ENCODE measurements at regions of chr5 and their contacts with region 1.

Region 1: DNA sequence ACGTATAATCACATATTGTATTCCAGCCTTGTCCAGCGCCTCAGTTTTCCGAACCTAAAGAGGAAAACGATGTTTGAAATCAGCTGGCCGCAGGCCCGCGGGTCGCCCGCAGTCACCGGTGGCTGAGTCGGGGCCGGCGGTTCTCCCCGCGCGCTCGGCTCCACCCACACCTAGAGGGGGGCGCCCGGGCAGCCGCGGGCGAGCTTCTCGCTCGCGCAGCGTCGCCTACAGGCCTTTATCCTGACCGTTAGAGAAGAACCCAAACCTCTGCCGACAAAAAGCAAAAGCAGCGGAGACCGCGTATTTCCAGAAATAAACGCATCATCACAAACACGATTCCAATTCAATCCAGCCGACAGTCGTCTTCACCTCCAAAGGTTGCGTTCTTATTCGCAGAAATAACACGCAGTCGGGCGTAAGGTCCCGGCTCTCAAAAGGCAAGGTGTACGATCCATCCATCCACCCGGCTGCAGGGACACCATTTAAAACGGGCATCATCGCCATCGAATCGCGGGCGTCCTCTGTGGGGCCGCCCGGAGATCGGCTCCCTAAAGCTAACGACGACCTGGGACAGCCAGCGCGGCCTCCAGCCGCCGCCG is 680 bp upstream of the NIPBL start:
- DNase-seq: peak; percentile 89
- ATAC-seq: peak; percentile 70
- H3K4me3 ChIP-seq: peak overlapping the region; percentile 85 to 99 (median 94)
- H3K4me3 Mint-ChIP-seq: peak overlapping the region; percentile 91
- H3K27ac ChIP-seq: peak overlapping the region; percentile 92 to 98
- H3K27ac Mint-ChIP-seq: peak overlapping the region; percentile 95
- H3K4me1 ChIP-seq: peaks cover 19 to 42% of the 10 kb centered on the region in 2 donors
- H3K4me1 Mint-ChIP-seq: peaks cover 40% of the 10 kb centered on the region
- H3K27me3 ChIP-seq: no peaks in the 10 kb centered on the region
- H3K27me3 Mint-ChIP-seq: no peaks in the 10 kb centered on the region
- CTCF ChIP-seq: peak; percentile 71

Region 2: GRCh38 chr5:36151434-36152323 is 724.2 kb before region 1 on chr5 and contains the starts of genes LMBRD2 and SKP2:
- CTCF ChIA-PET with region 1: no interaction called
- POLR2A ChIA-PET with region 1: interaction called, 3 read pairs
- intact Hi-C with region 1: loop called (anchors 1 kb)
- DNase-seq: peak; percentile 96
- ATAC-seq: peak; percentile 98
- H3K4me3 ChIP-seq: peak within 1 kb of the TSS; percentile 67 to 82 (median 78)
- H3K4me3 Mint-ChIP-seq: peak within 1 kb of the TSS; percentile 95
- H3K27ac ChIP-seq: peak within 1 kb of the TSS; percentile 55 to 83
- H3K27ac Mint-ChIP-seq: peak within 1 kb of the TSS; percentile 87
- H3K4me1 ChIP-seq: peaks cover 19 to 25% of the 10 kb centered on the region in 2 donors
- H3K4me1 Mint-ChIP-seq: peaks cover 46% of the 10 kb centered on the region
- H3K27me3 ChIP-seq: no peaks in the 10 kb centered on the region
- H3K27me3 Mint-ChIP-seq: no peaks in the 10 kb centered on the region
- CTCF ChIP-seq: no peak
- total RNA-seq, gene LMBRD2: 9.9 and 10.0 TPM in 2 replicates
- total RNA-seq, gene SKP2: 26.7 and 33.0 TPM in 2 replicates

Region 3: DNA sequence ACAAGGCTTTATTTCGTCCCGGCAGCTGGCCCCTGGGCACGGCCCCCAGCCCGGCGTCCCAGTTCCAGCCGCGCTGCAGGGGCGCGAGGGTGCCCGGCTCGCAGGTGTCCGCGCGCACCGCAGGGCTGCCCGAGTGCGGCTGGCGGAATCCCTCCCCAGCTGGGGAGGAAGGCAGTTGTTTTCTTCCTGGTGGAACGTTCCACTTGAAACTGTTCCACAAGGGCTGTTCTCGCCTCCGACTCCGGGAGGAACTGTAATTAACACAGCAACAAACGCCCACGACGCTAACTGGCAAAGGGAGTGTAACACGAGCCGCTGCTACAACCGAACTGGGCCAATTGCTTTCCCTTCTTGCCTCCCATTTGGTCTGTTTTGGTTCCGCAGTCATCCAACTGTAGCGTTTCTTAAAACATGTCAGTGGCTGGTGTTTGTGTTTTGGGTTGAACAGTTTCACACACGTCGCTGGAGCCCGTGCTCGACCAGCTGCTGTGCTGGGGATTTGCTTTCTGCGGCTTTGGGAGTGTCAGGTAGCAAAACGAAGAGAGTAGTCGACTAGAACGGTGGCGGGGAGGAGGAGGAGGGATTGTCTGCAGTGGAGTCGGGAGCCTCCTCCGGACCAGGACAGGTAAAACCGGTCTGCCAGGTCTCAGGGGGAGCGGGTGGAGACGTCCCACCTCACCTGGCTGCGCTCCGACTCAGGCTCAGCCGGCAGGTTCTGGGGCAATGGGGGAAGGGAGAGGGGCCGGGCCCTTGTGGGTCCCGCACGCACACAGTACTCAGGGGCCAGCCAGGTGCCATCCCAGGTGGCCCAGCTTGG is 130.9 kb before region 1 on chr5:
- CTCF ChIA-PET with region 1: interaction called, 36 read pairs
- POLR2A ChIA-PET with region 1: interaction called, 10 read pairs
- intact Hi-C with region 1: loop called (anchors 1 kb)
- DNase-seq: peak; percentile 70
- ATAC-seq: peak; percentile 70
- H3K4me3 ChIP-seq: peak overlapping the region; percentile 47 to 88 (median 63)
- H3K4me3 Mint-ChIP-seq: peak overlapping the region; percentile 95
- H3K27ac ChIP-seq: peak overlapping the region in 1 of 2 donors; percentile 44
- H3K27ac Mint-ChIP-seq: peak overlapping the region; percentile 94
- H3K4me1 ChIP-seq: peaks cover 20% of the 10 kb centered on the region in 2 donors
- H3K4me1 Mint-ChIP-seq: peaks cover 20% of the 10 kb centered on the region
- H3K27me3 ChIP-seq: peaks cover 0 to 13% (median 3%) of the 10 kb centered on the region in 4 experiments
- H3K27me3 Mint-ChIP-seq: peaks cover 12% of the 10 kb centered on the region
- CTCF ChIP-seq: peak; percentile 36

Region 4: DNA sequence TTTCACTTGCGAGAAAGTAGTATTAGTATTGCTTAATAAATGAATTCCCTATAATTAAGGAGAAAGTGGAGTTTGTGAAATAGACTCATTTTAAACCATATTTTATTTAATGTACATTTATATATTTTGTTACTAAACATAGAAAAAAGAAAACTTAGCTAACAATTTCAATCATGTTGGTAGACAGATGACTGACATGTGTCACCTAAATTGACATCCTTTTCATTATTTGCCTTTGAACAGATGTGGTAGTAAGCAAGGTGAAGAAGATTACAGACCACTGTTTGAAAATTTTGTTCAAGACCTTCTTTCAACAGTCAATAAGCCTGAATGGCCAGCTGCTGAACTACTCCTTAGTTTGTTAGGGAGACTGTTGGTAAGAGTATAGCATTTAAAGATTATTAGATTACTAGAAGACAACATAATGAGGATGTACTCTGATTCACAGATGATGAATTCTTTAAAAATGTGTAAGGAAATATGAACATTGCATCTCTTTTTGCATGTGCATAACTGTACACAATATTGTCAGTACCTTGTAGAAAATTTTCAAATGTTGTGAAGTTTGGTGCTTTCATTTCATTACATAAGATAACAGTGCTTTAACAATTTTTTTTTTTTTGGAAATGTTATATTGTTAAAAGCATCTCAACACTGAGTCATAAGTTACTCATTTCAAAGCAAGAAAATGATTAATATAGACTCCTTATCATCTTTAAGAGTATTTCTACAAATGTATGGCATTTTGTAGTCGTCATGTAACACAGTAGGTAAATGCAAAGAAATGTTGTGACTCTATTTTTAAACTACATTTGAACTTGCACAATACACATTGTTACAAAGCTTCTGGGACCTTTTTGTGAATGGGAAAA is 140.1 kb after region 1 on chr5:
- CTCF ChIA-PET with region 1: no interaction called
- POLR2A ChIA-PET with region 1: no interaction called
- intact Hi-C with region 1: no loop called
- DNase-seq: no peak
- ATAC-seq: no peak
- H3K4me3 ChIP-seq: no peak overlapping the region
- H3K4me3 Mint-ChIP-seq: no peak overlapping the region
- H3K27ac ChIP-seq: no peak overlapping the region
- H3K27ac Mint-ChIP-seq: no peak overlapping the region
- H3K4me1 ChIP-seq: no peaks in the 10 kb centered on the region
- H3K4me1 Mint-ChIP-seq: no peaks in the 10 kb centered on the region
- H3K27me3 ChIP-seq: no peaks in the 10 kb centered on the region
- H3K27me3 Mint-ChIP-seq: no peaks in the 10 kb centered on the region
- CTCF ChIP-seq: no peak

Region 5: GRCh38 chr5:37080697-37081096 is 204.8 kb after region 1 on chr5:
- CTCF ChIA-PET with region 1: no interaction called
- POLR2A ChIA-PET with region 1: no interaction called
- intact Hi-C with region 1: no loop called
- DNase-seq: no peak
- ATAC-seq: no peak
- H3K4me3 ChIP-seq: no peak overlapping the region
- H3K4me3 Mint-ChIP-seq: no peak overlapping the region
- H3K27ac ChIP-seq: no peak overlapping the region
- H3K27ac Mint-ChIP-seq: no peak overlapping the region
- H3K4me1 ChIP-seq: no peaks in the 10 kb centered on the region
- H3K4me1 Mint-ChIP-seq: no peaks in the 10 kb centered on the region
- H3K27me3 ChIP-seq: no peaks in the 10 kb centered on the region
- H3K27me3 Mint-ChIP-seq: no peaks in the 10 kb centered on the region
- CTCF ChIP-seq: no peak

Region 6: GRCh38 chr5:37370864-37371726 is 495.2 kb after region 1 on chr5 and contains the start of gene NUP155:
- CTCF ChIA-PET with region 1: no interaction called
- POLR2A ChIA-PET with region 1: interaction called, 3 read pairs
- intact Hi-C with region 1: loop called (anchors 2 kb)
- DNase-seq: peak; percentile 93
- ATAC-seq: peak; percentile 94
- H3K4me3 ChIP-seq: peak within 1 kb of the TSS; percentile 71 to 95 (median 94)
- H3K4me3 Mint-ChIP-seq: peak within 1 kb of the TSS; percentile 96
- H3K27ac ChIP-seq: peak within 1 kb of the TSS; percentile 83 to 92
- H3K27ac Mint-ChIP-seq: peak within 1 kb of the TSS; percentile 94
- H3K4me1 ChIP-seq: peaks cover 24% of the 10 kb centered on the region in 2 donors
- H3K4me1 Mint-ChIP-seq: peaks cover 30% of the 10 kb centered on the region
- H3K27me3 ChIP-seq: no peaks in the 10 kb centered on the region
- H3K27me3 Mint-ChIP-seq: no peaks in the 10 kb centered on the region
- CTCF ChIP-seq: no peak
- total RNA-seq, gene NUP155: 33.8 and 34.1 TPM in 2 replicates

Measured in B cell (primary cell).